Activated T-helper 1 cell treated with anti-CD3 and anti-CD28 coated beads, Interleukin-12 subunit alpha, Interleukin-12 subunit beta, Interleukin-2, Interleukin-4 antibody, amounts not matched to agents 30 ng/mL and 10 ng/mL and 1 ng/mL, durations not matched to agents 14 hours and 24 hours and 36 hours (primary cell): ENCODE measurements at regions of chr7 and their contacts with region 1.

Region 1: DNA sequence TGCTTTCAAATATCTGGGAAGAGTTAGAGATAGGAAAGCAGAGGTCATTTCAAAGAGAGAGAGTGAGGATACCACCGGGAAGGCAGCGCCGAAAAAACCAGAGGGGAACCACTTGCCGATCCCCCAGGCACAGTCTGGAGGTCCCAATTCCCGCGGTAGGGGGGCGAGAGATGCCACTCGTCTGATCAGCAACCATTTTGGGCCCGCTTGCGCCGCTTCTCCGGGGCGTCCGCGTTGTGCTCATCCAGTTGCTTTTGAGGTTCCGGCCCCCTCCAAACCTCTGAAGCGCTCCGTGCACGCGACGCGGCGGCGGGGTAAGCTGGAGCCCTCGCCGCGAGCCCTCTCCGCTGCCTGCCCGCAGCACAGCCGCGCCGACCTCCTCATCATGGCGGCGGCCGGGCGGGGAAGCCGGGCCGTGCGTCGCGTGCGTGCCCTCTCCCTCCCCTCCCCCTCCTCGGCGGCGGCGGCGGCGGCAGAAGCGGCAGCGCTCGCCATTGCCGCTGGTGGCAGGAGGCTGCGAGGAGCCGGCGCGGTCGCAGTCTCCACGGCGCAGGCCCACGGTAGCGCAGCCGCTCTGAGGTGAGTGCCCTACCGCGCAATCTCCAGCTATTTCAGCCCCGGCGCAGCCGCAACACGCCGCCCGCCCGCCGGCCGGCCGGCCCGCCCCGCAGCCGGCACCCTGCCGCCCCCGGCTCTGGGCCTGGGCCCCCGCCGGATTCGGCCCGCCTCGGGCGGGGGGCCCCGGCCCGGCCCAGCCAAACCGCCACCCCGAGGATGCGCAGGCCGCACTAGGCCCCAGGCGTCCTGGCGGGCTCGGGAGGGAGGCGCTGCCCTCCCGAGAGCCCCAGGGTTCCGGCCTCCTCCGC is at the start of gene NRF1:
- DNase-seq: peak; percentile 89
- H3K4me3 Mint-ChIP-seq: peak within 1 kb of the TSS; percentile 98
- H3K27ac Mint-ChIP-seq: peak within 1 kb of the TSS; percentile 99
- H3K4me1 Mint-ChIP-seq: peaks cover 48% of the 10 kb centered on the region
- H3K27me3 Mint-ChIP-seq: no peaks in the 10 kb centered on the region
- total RNA-seq, gene NRF1: 22.8 and 25.9 TPM in 2 replicates

Region 2: DNA sequence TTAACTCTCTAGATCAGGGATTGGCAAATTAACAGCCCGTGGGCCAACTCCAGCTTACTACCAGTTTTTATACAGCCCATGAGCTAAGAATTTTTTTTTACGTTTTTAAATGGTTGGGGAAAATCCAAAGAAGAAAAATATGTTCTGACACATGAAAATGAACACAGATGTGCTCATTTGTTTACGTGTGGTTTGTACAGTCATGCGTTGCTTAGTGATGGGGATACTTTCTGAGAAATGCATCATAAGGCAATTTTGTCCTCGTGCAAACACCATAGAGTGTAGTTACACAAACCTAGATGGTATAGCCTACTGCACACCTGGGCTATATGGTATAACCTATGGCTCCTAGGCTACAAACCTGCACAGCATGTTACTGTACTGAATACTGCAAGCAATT is 117.4 kb before region 1 on chr7:
- intact Hi-C with region 1: loop called (anchors 2 kb)
- DNase-seq: peak; percentile 24
- H3K4me3 Mint-ChIP-seq: no peak overlapping the region
- H3K27ac Mint-ChIP-seq: peak overlapping the region; percentile 85
- H3K4me1 Mint-ChIP-seq: peaks cover 29% of the 10 kb centered on the region
- H3K27me3 Mint-ChIP-seq: no peaks in the 10 kb centered on the region

Region 3: GRCh38 chr7:129502376-129502776 is 109.1 kb before region 1 on chr7 and contains the start of gene SMKR1:
- intact Hi-C with region 1: loop called (anchors 1 kb)
- DNase-seq: peak; percentile 90
- H3K4me3 Mint-ChIP-seq: peak within 1 kb of the TSS; percentile 82
- H3K27ac Mint-ChIP-seq: peak within 1 kb of the TSS; percentile 86
- H3K4me1 Mint-ChIP-seq: peaks cover 19% of the 10 kb centered on the region
- H3K27me3 Mint-ChIP-seq: peaks cover 16% of the 10 kb centered on the region
- total RNA-seq, gene SMKR1: 4.8 and 5.7 TPM in 2 replicates

Region 4: DNA sequence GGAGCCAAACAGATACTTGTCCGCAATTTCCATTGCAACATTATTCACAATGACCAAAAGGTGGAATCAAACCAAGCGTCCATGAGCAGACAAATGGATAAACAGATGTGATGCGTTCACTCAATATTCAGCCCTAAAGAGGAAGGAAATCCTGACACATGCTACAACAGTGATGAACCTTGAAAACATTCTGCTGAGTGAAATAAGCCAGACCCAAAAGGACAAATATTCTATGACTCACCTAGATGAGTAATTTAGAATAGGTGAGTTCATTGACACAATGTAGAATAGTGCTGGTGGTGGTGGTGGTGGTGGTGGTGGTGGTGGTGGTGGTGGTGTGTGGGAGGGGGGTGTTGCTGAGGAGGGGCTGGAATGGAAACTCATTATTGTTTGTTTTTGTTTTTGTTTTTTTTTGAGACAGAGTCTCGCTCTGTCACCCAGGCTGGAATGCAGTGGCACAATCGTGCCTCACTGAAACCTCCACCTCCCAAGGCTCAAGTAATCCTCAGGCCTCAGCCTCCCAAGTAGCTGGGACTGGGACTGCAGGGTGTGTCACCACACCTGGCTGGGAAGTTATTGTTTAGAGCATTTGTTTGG is 80.6 kb before region 1 on chr7:
- intact Hi-C with region 1: loop called (anchors 1 kb)
- DNase-seq: peak; percentile 8
- H3K4me3 Mint-ChIP-seq: no peak overlapping the region
- H3K27ac Mint-ChIP-seq: peak overlapping the region; percentile 79
- H3K4me1 Mint-ChIP-seq: peaks cover 12% of the 10 kb centered on the region
- H3K27me3 Mint-ChIP-seq: no peaks in the 10 kb centered on the region

Region 5: DNA sequence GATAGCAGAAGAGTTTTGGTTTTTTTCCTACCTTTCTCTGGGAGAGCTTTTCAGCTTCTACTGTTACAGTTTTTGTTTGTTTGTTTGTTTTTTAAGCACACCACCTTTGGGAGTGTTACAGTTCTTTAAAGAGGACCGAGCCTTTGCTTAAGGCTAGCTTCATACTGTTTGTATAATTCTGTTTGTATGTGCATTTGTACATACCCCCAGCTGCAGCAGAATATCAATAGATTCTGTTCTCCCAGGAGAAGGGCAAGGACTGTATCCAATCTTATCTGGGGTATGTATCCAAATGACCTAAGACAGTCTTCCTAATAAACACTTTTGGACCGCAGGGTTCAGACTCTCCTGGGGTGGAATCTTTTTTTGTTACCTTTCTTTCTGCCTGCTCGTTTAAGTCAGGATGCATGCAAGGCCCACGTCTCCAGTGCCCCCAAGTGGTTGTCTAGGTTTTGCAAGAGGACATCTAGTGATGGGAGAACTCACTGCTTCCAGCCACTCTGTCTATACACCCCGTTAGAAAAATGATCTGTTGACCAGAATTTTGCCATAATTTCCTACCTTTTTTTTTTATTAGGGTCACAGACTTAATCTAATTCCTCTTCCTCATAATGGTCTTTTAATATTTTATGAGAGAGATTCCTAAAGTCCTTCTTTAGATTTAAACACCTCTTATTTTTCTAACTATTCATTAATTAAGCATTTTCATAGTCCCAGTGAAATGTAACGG is 24.0 kb after region 1 on chr7:
- intact Hi-C with region 1: loop called (anchors 1 kb)
- DNase-seq: peak; percentile 51
- H3K4me3 Mint-ChIP-seq: no peak overlapping the region
- H3K27ac Mint-ChIP-seq: no peak overlapping the region
- H3K4me1 Mint-ChIP-seq: peaks cover 23% of the 10 kb centered on the region
- H3K27me3 Mint-ChIP-seq: no peaks in the 10 kb centered on the region

Region 6: GRCh38 chr7:129664029-129665012 is 52.8 kb after region 1 on chr7:
- intact Hi-C with region 1: no loop called
- DNase-seq: no peak
- H3K4me3 Mint-ChIP-seq: no peak overlapping the region
- H3K27ac Mint-ChIP-seq: no peak overlapping the region
- H3K4me1 Mint-ChIP-seq: peaks cover 4% of the 10 kb centered on the region
- H3K27me3 Mint-ChIP-seq: no peaks in the 10 kb centered on the region

Region 7: DNA sequence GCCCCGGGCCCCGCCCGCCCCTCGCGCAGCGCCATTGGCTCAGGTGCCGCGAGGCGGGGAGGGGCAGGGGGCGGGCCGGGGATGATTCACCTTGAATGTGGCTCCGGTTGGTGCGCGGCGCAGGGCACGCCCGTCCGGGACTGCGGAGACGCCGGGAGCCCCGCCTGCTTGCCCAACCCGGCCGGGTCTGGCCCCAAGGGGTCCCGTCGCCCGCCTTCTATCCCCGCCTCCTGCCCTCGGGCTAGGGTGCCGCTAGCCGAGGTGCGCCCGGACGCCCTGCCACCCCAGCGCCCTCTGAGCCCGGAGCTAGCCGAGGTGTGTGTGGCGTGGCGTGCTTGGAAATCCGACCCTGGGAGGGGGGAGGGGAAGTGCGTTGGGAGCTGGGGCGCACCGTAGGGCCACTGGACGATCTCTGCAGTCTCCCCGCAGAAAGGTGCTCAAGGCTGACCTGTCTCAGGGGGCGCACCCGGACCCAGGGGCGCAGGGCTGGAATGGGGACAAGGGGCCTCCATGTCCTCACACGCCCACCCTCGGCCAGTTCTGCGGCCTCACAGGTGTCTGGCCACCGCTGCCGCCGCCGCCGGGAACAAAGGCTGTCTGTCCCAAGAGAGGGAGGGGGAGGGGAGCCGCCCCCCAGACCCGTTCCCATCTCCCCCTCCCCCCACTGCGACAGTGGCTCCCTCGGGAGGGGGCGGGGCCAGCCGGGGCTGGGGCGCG is 168.9 kb after region 1 on chr7:
- intact Hi-C with region 1: loop called (anchors 5 kb)
- DNase-seq: peak; percentile 48
- H3K4me3 Mint-ChIP-seq: peak overlapping the region; percentile 63
- H3K27ac Mint-ChIP-seq: no peak overlapping the region
- H3K4me1 Mint-ChIP-seq: peaks cover 23% of the 10 kb centered on the region
- H3K27me3 Mint-ChIP-seq: peaks cover 67% of the 10 kb centered on the region